ENCODE measurements at regions of chr10 and their contacts with region 1.

Region 1: GRCh38 chr10:48656241-48656913 is 28.3 kb upstream of the WDFY4 start:
- DNase-seq: peak; percentile 85
- H3K4me3 ChIP-seq: peak overlapping the region; percentile 30 to 70 (median 59)
- H3K27ac ChIP-seq: no peak overlapping the region
- H3K4me1 ChIP-seq: peaks cover 16% of the 10 kb centered on the region
- H3K27me3 ChIP-seq: no peaks in the 10 kb centered on the region
- CTCF ChIP-seq: peak; percentile 85

Region 2: GRCh38 chr10:48309711-48310226 is 346.6 kb before region 1 on chr10:
- CTCF ChIA-PET with region 1: interaction called, 10 read pairs
- dilution Hi-C with region 1: no loop called
- in situ Hi-C with region 1: no loop called
- intact Hi-C with region 1: no loop called
- DNase-seq: peak; percentile 76
- H3K4me3 ChIP-seq: no peak overlapping the region
- H3K27ac ChIP-seq: no peak overlapping the region
- H3K4me1 ChIP-seq: peaks cover 35% of the 10 kb centered on the region
- H3K27me3 ChIP-seq: no peaks in the 10 kb centered on the region
- CTCF ChIP-seq: peak in 1 of 2 donors; percentile 43

Region 3: GRCh38 chr10:48444266-48444665 is 212.1 kb before region 1 on chr10:
- CTCF ChIA-PET with region 1: interaction called, 41 read pairs
- dilution Hi-C with region 1: no loop called
- in situ Hi-C with region 1: loop called in 1 of 2 experiments (anchors 10 kb)
- intact Hi-C with region 1: loop called (anchors 1 kb)
- DNase-seq: peak; percentile 33
- H3K4me3 ChIP-seq: no peak overlapping the region
- H3K27ac ChIP-seq: no peak overlapping the region
- H3K4me1 ChIP-seq: peaks cover under 1% of the 10 kb centered on the region
- H3K27me3 ChIP-seq: no peaks in the 10 kb centered on the region
- CTCF ChIP-seq: peak in 1 of 2 donors; percentile 64

Region 4: GRCh38 chr10:48551861-48552591 is 104.4 kb before region 1 on chr10:
- CTCF ChIA-PET with region 1: interaction called, 33 read pairs
- dilution Hi-C with region 1: no loop called
- in situ Hi-C with region 1: loop called (anchors 5 kb)
- intact Hi-C with region 1: loop called (anchors 1 kb)
- DNase-seq: peak; percentile 11
- H3K4me3 ChIP-seq: no peak overlapping the region
- H3K27ac ChIP-seq: no peak overlapping the region
- H3K4me1 ChIP-seq: no peaks in the 10 kb centered on the region
- H3K27me3 ChIP-seq: no peaks in the 10 kb centered on the region
- CTCF ChIP-seq: peak; percentile 70 to 72

Region 5: GRCh38 chr10:48627984-48628609 is 28.3 kb before region 1 on chr10:
- CTCF ChIA-PET with region 1: interaction called, 3 read pairs
- dilution Hi-C with region 1: loop called (anchors 5 kb)
- in situ Hi-C with region 1: no loop called
- intact Hi-C with region 1: no loop called
- DNase-seq: no peak
- H3K4me3 ChIP-seq: no peak overlapping the region
- H3K27ac ChIP-seq: no peak overlapping the region
- H3K4me1 ChIP-seq: no peaks in the 10 kb centered on the region
- H3K27me3 ChIP-seq: no peaks in the 10 kb centered on the region
- CTCF ChIP-seq: no peak

Region 6: DNA sequence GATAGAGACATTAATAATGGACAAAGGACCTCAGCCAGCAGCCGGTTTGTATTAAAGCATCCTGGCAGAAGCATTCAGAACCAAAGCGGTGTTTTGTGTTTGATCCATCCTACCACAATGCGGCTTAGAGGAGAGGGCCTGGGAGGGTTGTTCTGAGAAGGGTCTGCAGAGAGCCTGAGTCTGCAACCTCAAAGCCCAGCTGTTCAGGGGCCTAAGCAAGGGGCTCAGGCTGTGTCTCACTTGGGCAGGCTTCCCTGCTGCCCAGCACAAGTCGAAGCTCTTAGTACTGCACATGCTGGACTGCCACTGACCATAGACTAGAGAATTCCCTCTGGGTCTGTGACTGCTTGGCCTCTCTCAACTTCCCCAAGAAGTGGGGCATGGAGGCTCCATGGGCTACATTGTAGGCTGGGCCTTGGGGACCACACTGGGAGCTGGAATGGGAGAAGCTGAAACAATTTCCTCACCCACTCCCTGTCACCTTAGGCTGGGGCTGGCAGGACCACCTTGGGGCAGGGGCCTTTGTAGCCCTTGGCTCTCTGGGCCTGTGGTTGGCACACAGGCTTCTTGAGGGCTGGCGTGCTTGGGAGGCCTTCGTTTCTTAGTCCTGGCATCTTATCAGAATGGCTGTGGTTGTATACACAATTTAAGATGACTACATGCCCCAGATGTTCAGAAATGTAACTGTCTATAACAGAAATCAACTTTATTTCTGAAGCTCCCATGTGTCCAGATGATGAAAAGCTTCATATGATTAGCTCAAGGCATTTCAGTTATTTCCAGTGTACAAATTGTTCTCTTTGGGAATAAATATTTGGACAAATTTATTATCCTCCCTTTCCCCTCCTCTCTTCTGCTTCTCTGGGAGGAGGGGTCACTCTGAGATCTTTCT is 238.8 kb after region 1 on chr10:
- CTCF ChIA-PET with region 1: no interaction called
- dilution Hi-C with region 1: no loop called
- in situ Hi-C with region 1: no loop called
- intact Hi-C with region 1: no loop called
- DNase-seq: no peak
- H3K4me3 ChIP-seq: no peak overlapping the region
- H3K27ac ChIP-seq: no peak overlapping the region
- H3K4me1 ChIP-seq: no peaks in the 10 kb centered on the region
- H3K27me3 ChIP-seq: no peaks in the 10 kb centered on the region
- CTCF ChIP-seq: no peak

Region 7: GRCh38 chr10:48976196-48976595 is 319.8 kb after region 1 on chr10:
- CTCF ChIA-PET with region 1: no interaction called
- dilution Hi-C with region 1: no loop called
- in situ Hi-C with region 1: no loop called
- intact Hi-C with region 1: loop called (anchors 1 kb)
- DNase-seq: peak; percentile 5
- H3K4me3 ChIP-seq: no peak overlapping the region
- H3K27ac ChIP-seq: no peak overlapping the region
- H3K4me1 ChIP-seq: no peaks in the 10 kb centered on the region
- H3K27me3 ChIP-seq: no peaks in the 10 kb centered on the region
- CTCF ChIP-seq: peak in 1 of 2 donors; percentile 55

Region 8: GRCh38 chr10:49518982-49519578 is 862.7 kb after region 1 on chr10:
- CTCF ChIA-PET with region 1: interaction called, 3 read pairs
- dilution Hi-C with region 1: no loop called
- in situ Hi-C with region 1: loop called (anchors 25 kb)
- intact Hi-C with region 1: loop called (anchors 1 kb)
- DNase-seq: peak; percentile 26
- H3K4me3 ChIP-seq: no peak overlapping the region
- H3K27ac ChIP-seq: no peak overlapping the region
- H3K4me1 ChIP-seq: no peaks in the 10 kb centered on the region
- H3K27me3 ChIP-seq: no peaks in the 10 kb centered on the region
- CTCF ChIP-seq: peak; percentile 63 to 68

Measured in mammary epithelial cell (primary cell).